PC-3 (cell line): ENCODE measurements at regions of chr3 and their contacts with region 1.

Region 1: DNA sequence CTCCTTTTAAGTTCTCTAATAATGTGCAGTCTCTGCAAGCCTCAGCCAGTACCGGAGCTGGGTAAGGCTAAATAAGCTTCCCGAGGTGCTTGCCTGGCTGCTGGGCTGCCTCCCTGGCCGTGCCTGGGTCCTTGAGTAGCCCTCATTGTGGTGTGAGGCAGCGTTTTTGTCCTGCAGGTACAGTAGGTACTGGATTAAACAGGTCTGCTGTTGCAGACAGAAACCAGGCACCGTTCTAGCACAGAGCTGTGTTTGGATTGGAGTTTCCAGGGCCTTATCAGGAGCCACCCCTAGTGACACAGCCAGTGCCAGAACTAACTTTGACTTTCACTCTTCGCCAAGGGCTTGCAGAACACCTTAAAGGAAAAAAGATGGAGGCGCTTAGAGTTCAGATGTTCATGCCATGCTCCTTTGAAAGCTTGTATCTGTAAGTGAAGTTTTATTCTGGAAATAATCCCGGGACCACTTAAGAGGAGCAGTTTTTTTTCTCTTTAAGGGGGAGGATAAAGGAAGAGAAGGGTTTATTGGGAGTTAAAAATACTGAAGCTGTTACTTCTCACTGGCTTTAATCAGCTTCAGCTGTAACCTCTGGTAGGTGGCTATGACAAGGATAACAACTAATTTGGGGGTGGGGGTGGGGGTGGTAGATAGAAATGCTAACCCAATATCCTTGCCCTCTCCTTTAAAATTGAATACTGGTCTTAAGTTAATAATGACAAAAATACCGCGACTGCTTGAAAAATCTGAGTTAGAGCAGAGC is 126.8 kb downstream of the MITF start:
- DNase-seq: no peak
- ATAC-seq: no peak
- H3K4me3 ChIP-seq: no peak overlapping the region
- H3K27ac ChIP-seq: peak overlapping the region; percentile 77
- H3K4me1 ChIP-seq: peaks cover 54% of the 10 kb centered on the region
- H3K27me3 ChIP-seq: no peaks in the 10 kb centered on the region
- CTCF ChIP-seq: no peak

Region 2: GRCh38 chr3:69739204-69740102 is 126.6 kb before region 1 on chr3 and contains the start of gene MITF:
- CTCF ChIA-PET with region 1: no interaction called
- POLR2A ChIA-PET with region 1: no interaction called
- intact Hi-C with region 1: no loop called
- DNase-seq: peak; percentile 80
- ATAC-seq: peak; percentile 97
- H3K4me3 ChIP-seq: peak within 1 kb of the TSS; percentile 80
- H3K27ac ChIP-seq: no peak within 1 kb of the TSS
- H3K4me1 ChIP-seq: no peaks in the 10 kb centered on the region
- H3K27me3 ChIP-seq: no peaks in the 10 kb centered on the region
- CTCF ChIP-seq: no peak
- total RNA-seq, gene MITF: 2.8 and 7.6 TPM in 2 replicates

Region 3: GRCh38 chr3:69761896-69762767 is 104.0 kb before region 1 on chr3:
- CTCF ChIA-PET with region 1: no interaction called
- POLR2A ChIA-PET with region 1: no interaction called
- intact Hi-C with region 1: no loop called
- DNase-seq: peak; percentile 81
- ATAC-seq: peak; percentile 90
- H3K4me3 ChIP-seq: peak overlapping the region; percentile 33
- H3K27ac ChIP-seq: peak overlapping the region; percentile 85
- H3K4me1 ChIP-seq: peaks cover 52% of the 10 kb centered on the region
- H3K27me3 ChIP-seq: no peaks in the 10 kb centered on the region
- CTCF ChIP-seq: no peak

Region 4: DNA sequence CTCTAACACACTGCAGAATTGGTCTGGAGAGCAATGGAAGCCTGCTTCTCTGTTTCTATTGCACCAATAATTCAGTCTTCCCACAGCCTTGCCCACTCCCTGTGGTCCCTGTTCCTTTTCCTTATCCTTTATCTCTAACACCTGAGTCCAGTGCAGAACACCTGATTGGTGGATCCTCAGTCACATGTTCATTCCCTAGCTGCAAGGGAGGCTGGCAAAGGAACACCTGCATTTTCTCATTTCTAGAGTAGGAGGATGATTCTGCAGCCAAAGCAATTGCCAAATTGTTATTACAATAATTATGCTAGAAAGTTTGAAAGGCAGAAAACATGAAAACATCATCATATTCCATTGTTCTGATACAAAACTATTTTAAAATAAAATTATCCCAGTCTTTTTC is 49.6 kb after region 1 on chr3:
- CTCF ChIA-PET with region 1: no interaction called
- POLR2A ChIA-PET with region 1: no interaction called
- intact Hi-C with region 1: loop called (anchors 5 kb)
- DNase-seq: no peak
- ATAC-seq: no peak
- H3K4me3 ChIP-seq: no peak overlapping the region
- H3K27ac ChIP-seq: no peak overlapping the region
- H3K4me1 ChIP-seq: peaks cover 16% of the 10 kb centered on the region; the same call in 1 of the 2 replicates
- H3K27me3 ChIP-seq: no peaks in the 10 kb centered on the region
- CTCF ChIP-seq: no peak